ENCODE measurements at regions of chr18 and their contacts with region 1.

Region 1: DNA sequence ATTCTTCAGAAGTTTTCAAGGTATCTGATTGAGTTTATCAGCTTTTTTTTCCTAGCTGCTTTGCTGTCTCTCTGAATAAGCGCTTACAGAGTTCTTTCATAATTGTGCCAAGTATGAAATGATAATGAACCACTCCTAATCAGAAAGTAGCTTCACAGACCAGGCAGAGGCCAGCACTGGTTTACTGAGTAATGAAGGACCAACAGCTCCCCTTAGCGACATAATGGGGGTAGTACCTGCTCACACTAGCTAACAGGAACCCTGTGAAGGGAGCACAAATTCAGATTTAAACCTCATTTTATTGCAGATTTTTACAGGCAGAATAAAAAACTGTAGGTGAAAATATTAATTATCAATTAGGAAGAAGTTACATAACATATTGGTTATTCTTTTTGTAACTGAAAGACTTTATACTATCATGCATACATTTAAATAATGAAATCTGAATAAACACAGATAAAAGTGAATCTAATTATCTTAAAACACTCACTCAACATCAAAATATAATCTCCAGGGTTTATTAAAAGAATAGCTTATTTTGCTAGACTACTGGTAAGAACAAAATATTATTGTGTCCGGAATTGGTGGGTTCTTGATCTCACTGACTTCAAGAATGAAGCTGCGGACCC is 53.7 kb upstream of the LRRC30 start:
- DNase-seq: peak; percentile 58

Region 2: GRCh38 chr18:6920099-6920899 is 256.9 kb before region 1 on chr18:
- CTCF ChIA-PET with region 1: interaction called, 16 read pairs
- POLR2A ChIA-PET with region 1: no interaction called
- DNase-seq: peak; percentile 50

Region 3: GRCh38 chr18:7038330-7038851 is 138.8 kb before region 1 on chr18:
- CTCF ChIA-PET with region 1: interaction called, 18 read pairs
- POLR2A ChIA-PET with region 1: interaction called, 3 read pairs
- DNase-seq: peak; percentile 65

Region 4: GRCh38 chr18:7158216-7158615 is 19.0 kb before region 1 on chr18:
- CTCF ChIA-PET with region 1: no interaction called
- POLR2A ChIA-PET with region 1: no interaction called
- DNase-seq: no peak